Aorta (tissue), 5 donors: ENCODE measurements at regions of chr13 and their contacts with region 1.

Region 1: GRCh38 chr13:106520205-106521054 is 15.0 kb downstream of the EFNB2 start:
- DNase-seq: no peak
- ATAC-seq: no peak
- H3K4me3 ChIP-seq: no peak overlapping the region
- H3K27ac ChIP-seq: no peak overlapping the region
- H3K4me1 ChIP-seq: peaks cover 8 to 9% of the 10 kb centered on the region in 2 donors
- H3K27me3 ChIP-seq: no peaks in the 10 kb centered on the region

Region 2: DNA sequence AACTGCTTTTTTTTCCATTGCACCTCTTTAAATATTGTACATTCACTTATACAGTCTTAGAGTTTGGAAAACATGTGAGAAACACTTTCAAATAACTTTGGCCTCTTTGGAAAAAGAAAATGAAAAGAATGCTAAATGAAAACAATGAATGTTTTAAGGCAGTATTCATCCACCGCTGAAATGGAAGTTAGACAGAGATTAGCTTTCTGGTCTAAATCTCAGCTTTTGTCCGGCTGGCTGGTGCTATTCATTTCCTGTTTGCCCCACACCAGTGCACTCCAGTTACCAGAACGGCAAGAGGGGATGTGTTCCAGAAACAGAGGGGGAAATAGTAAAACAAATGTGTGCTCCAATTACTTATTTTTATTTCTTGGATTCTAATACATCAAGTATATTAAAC is 1186.2 kb before region 1 on chr13:
- intact Hi-C with region 1: loop called in 1 of 2 experiments (anchors 10 kb)
- DNase-seq: no peak
- ATAC-seq: no peak
- H3K4me3 ChIP-seq: no peak overlapping the region
- H3K27ac ChIP-seq: peak overlapping the region; percentile 76 to 85
- H3K4me1 ChIP-seq: peaks cover 2 to 11% of the 10 kb centered on the region in 2 donors
- H3K27me3 ChIP-seq: no peaks in the 10 kb centered on the region

Region 3: DNA sequence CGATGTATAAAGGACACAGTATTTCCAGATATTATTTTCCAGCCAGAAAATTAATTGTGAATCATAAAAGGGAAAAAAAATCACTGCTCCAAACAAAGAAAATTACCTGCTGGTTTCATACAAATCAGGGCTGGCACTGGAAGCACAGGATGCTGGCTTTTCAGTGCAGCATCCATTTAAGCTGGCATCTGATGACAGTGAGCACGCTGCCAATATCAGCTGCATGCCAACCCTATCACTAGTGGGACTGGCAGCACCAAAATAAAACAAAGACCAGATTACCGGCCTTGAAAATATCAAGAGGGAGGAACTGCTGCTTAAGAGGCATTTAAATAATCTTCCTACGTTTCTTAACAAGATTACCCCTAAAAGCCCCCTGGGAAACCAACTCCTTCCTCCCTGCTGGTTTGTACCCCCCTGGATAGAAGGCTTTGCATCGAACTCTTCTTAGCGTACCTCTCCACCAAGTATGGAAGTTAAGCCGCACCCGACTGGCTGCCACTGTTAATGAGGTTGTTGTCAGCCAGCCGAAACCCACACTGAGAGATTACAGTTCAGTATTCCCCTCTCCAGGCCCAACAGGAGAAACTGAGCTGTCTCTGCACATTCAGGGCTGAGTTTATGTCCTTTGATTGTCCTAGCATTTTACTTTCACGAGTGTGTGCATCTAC is 242.8 kb before region 1 on chr13:
- intact Hi-C with region 1: loop called in 1 of 2 experiments (anchors 10 kb)
- DNase-seq: no peak
- ATAC-seq: no peak
- H3K4me3 ChIP-seq: no peak overlapping the region
- H3K27ac ChIP-seq: no peak overlapping the region
- H3K4me1 ChIP-seq: peaks cover 0 to 1% of the 10 kb centered on the region in 2 donors
- H3K27me3 ChIP-seq: no peaks in the 10 kb centered on the region

Region 4: DNA sequence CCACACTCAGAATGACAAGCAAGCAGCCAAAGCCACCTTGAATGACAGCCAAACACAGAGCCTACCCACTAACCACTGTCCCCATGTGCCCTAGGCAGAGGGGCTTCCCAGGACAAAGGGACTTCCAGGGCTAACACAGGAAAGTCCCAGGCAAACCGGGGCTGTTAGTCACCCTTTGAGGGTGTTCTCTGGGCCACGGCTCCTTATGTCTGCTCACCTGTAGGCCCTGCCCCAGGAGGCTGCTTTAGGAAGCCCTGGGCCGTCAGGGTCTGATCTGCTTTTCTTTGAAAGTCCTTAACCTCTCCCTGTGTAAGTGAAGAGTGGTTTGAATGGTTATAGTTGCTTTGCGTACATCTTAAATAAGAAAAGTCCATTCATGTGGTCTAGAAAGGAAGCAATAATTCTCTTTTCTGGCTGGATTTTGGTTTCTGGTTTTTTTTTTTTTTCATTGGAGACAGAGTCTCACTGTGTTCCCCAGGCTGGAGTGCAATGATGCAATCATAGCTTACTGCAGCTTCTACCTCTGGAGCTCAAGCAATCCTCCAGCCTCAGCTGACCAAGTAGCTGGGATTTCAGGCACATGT is 146.3 kb before region 1 on chr13:
- intact Hi-C with region 1: loop called in 1 of 2 experiments (anchors 5 kb)
- DNase-seq: no peak
- ATAC-seq: peak; percentile 28
- H3K4me3 ChIP-seq: no peak overlapping the region
- H3K27ac ChIP-seq: peak overlapping the region in 1 of 2 donors; percentile 8
- H3K4me1 ChIP-seq: peaks cover 0 to 3% of the 10 kb centered on the region in 2 donors
- H3K27me3 ChIP-seq: no peaks in the 10 kb centered on the region

Region 5: GRCh38 chr13:106484537-106485193 is 35.8 kb before region 1 on chr13:
- intact Hi-C with region 1: no loop called
- DNase-seq: peak in 1 of 2 donors; percentile 75
- ATAC-seq: peak; percentile 81
- H3K4me3 ChIP-seq: peak overlapping the region in 1 of 2 donors; percentile 12
- H3K27ac ChIP-seq: peak overlapping the region; percentile 98 to 99
- H3K4me1 ChIP-seq: peaks cover 0 to 10% of the 10 kb centered on the region in 2 donors
- H3K27me3 ChIP-seq: no peaks in the 10 kb centered on the region